Calu3 (cell line): ENCODE measurements at regions of chr5 and their contacts with region 1.

Region 1: GRCh38 chr5:35598707-35599370 is 18.8 kb upstream of the SPEF2 start:
- DNase-seq: peak; percentile 42
- H3K4me3 Mint-ChIP-seq: no peak overlapping the region
- H3K27ac Mint-ChIP-seq: no peak overlapping the region
- H3K4me1 Mint-ChIP-seq: no peaks in the 10 kb centered on the region
- H3K27me3 Mint-ChIP-seq: no peaks in the 10 kb centered on the region
- CTCF ChIP-seq: no peak

Region 2: DNA sequence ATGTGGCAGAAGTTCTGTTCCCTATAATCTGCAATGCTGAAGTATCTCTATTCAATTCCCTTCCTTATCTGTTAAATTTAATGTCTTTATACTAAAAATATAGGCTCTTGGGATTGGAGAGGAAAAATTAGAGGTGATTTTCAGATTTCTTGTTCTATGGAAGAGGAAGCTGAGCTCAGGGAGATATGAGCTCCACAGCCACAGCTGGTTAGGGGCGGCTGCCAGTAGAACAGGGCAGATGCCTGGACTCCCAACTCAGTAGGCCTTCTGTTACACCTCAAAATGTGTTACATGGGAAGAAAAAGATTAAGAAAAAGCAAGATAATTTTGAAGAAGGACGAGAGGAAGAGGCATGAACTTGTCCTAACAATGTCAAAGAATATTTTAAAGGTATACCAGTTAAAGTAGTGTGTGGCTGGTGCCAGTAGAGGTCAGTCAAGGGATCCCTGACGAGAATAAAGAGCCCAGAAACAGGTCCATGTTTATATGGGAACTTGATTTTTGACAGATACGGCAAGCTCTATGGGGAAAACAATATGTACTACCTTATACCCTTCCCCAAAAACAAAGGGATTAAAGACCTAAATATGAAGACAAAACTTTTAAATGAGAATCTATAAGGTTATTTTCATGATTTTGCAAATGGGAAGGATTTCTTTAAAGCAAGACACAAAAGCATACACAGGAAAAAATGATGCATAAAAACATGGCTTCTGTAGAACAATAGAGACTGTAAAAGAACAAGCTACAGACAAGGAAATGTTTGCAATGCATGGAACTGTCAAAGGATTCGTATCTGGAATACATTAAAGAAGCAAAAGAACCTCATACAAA is 640.8 kb before region 1 on chr5:
- CTCF ChIA-PET with region 1: no interaction called
- intact Hi-C with region 1: no loop called
- DNase-seq: peak; percentile 24
- H3K4me3 Mint-ChIP-seq: no peak overlapping the region
- H3K27ac Mint-ChIP-seq: peak overlapping the region; percentile 18
- H3K4me1 Mint-ChIP-seq: no peaks in the 10 kb centered on the region
- H3K27me3 Mint-ChIP-seq: no peaks in the 10 kb centered on the region
- CTCF ChIP-seq: no peak

Region 3: GRCh38 chr5:35229076-35230037 is 369.5 kb before region 1 on chr5:
- CTCF ChIA-PET with region 1: interaction called, 3 read pairs
- intact Hi-C with region 1: loop called (anchors 1 kb)
- DNase-seq: peak; percentile 55
- H3K4me3 Mint-ChIP-seq: peak overlapping the region; percentile 72
- H3K27ac Mint-ChIP-seq: peak overlapping the region; percentile 37
- H3K4me1 Mint-ChIP-seq: peaks cover 10% of the 10 kb centered on the region
- H3K27me3 Mint-ChIP-seq: peaks cover 70% of the 10 kb centered on the region
- CTCF ChIP-seq: no peak

Region 4: DNA sequence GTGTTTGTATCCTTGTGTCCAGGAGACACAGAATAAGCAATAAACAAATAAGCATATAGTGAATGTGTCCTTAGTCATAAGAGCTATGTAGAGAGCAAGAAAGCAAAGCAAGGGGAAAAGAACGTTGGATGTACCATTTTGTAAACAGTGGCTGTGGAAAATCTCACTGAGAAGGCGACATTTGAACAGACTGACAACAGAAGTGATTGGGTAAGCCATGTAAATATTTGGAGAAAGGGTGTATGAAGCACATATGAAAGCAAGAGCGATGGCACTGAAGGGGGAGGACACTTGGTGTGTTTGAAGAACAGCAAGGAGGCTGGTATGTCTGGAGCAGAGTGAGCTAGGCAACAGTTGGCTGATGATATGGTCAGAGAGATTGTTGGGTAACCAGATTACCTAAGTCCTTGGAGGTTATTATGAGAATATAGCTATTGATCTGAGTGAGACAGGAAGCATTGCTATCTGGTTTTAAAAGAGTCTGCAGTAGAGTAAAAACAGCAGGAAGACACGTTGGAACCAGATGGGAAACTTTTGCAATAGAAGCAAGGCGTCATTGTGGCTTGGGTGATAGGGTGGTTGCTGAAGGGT is 142.4 kb after region 1 on chr5:
- CTCF ChIA-PET with region 1: no interaction called
- intact Hi-C with region 1: no loop called
- DNase-seq: no peak
- H3K4me3 Mint-ChIP-seq: no peak overlapping the region
- H3K27ac Mint-ChIP-seq: no peak overlapping the region
- H3K4me1 Mint-ChIP-seq: no peaks in the 10 kb centered on the region
- H3K27me3 Mint-ChIP-seq: no peaks in the 10 kb centered on the region
- CTCF ChIP-seq: no peak

Region 5: DNA sequence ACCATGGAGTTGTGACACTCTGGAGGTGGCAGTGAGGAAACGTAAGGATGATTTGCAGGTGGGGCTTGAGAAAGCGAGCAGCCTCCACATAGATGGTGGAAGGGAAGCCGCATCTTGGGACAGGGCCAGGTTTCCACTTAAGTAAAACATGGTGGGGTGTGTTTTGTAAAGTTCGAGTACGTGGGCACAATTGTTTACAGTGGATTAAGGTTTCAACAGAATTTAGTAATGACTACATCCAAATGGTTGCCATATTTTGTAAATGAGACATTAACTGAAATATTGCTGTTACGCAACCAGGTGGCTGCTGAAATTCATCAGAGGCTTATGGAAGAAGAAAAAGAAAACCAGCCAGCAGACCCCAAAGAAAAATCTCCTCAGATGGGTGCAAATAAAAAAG is 172.5 kb after region 1 on chr5:
- CTCF ChIA-PET with region 1: no interaction called
- intact Hi-C with region 1: no loop called
- DNase-seq: no peak
- H3K4me3 Mint-ChIP-seq: no peak overlapping the region
- H3K27ac Mint-ChIP-seq: no peak overlapping the region
- H3K4me1 Mint-ChIP-seq: no peaks in the 10 kb centered on the region
- H3K27me3 Mint-ChIP-seq: no peaks in the 10 kb centered on the region
- CTCF ChIP-seq: no peak